ENCODE measurements at regions of chr10 and their contacts with region 1.

Region 1: DNA sequence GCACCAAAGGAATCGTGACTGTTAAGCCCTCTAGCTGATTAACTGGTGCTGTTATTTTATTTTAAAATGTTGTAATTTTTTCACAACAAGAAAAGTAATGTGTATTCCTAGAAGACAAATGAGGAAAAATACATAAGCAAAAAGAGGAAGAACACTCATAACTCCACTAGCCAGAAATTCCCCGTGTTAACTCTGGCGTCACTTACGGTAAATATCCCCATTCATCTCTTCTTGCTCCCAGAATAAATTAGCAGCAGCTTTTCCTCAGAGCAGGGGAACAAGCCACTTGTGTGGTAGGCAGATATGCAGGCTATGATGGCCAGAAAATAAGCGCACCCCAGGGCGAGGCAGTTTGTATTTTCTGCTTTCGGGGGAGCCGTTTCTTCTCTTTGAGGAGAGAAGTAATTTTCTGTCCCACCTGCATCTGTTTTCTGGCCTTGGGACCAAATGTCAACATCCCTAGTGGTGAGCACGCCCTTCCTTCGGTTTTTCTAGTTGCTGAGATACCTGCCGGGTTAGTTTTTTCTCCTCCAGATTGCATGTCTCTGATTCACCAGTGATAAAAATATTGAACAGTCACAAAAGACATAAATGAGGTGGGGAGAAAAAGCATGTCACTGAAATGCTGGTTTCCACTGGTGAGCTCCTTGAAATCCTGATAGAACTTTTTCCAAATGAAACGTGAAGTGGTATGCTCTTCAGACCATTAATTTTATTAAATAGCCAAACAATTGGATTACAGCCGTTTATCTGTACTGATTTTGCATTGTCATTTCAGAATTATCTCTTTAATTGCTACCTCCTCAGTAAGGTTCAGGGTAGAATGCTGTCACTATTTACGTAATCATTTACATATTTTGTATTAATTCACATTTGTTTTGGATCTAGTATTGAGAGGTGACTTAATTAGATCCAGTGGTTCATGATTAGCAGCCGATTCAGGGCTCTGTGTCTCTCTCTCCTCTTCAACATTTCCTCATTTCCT is 268.1 kb downstream of the CAMK1D start:
- H3K4me3 Mint-ChIP-seq: no peak overlapping the region
- H3K27ac Mint-ChIP-seq: peak overlapping the region; percentile 81
- H3K4me1 Mint-ChIP-seq: peaks cover 30% of the 10 kb centered on the region
- H3K27me3 Mint-ChIP-seq: peaks cover 3% of the 10 kb centered on the region

Region 2: DNA sequence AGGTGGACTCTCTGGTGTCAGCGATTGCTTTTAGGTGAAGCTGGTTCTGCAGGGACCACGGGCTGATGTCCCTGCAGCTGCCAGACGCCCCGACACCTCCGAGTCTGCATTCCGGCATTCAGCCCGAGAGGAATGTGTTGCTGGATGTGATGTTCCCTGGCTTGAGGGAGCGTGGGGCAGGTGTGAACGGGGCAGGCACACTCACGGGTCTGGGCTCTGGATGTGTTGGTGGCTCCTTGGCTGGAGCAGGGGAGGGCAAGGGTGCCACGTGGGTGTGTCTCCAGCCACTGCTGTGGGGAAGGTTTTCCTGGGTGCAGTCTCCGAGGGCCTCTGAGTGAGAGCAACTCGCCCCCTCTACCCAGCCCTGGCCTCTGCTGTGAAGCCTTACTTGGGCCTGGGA is 127.7 kb before region 1 on chr10:
- intact Hi-C with region 1: no loop called
- H3K4me3 Mint-ChIP-seq: no peak overlapping the region
- H3K27ac Mint-ChIP-seq: peak overlapping the region; percentile 40
- H3K4me1 Mint-ChIP-seq: peaks cover 41% of the 10 kb centered on the region
- H3K27me3 Mint-ChIP-seq: no peaks in the 10 kb centered on the region

Region 3: DNA sequence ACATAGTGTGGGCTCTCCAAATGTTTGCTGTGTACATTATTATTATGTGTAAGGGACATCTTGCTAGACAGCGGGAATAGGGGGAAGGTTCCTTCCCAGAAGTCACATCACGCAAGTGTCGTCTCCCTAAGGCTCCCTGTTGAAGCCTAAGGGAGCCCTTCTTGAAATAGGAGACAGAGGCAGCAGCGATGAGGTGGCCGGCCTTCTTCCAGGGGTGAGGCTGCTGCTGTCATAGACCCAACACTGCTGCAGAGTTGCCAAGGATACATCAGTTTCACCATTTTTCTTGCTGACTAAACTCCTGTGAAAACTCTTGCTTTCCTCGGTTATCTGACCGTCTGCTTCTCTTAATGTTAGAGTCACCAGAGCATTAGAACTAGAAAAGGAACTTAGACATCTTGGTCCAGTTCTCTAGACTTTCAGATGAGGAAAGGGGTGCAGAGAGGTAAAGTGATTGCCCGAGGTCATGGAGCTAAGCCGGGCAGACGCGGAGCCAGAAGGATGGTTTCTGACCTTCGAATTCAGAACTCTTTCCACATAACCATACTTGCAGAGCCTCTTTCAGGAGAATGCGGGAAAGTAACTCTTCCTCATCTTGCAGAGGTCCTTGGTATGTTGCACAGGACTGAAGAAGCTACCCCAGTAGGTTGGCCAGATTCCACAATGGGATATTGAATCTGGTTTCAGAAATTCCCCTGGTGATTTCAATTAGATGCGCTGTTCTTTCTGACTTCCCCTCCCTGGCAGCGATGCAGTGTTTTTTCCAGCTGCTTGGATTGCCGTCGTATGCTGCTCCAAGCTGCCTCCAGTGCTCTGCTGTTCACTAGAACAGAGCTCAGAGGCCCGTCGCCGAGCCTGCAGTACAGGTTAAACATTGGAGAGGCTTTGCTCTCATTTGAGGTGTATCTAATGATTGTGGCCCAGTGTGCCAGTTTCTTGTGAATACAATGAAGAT is 51.0 kb before region 1 on chr10:
- intact Hi-C with region 1: no loop called
- H3K4me3 Mint-ChIP-seq: no peak overlapping the region
- H3K27ac Mint-ChIP-seq: no peak overlapping the region
- H3K4me1 Mint-ChIP-seq: peaks cover 35% of the 10 kb centered on the region
- H3K27me3 Mint-ChIP-seq: no peaks in the 10 kb centered on the region

Region 4: DNA sequence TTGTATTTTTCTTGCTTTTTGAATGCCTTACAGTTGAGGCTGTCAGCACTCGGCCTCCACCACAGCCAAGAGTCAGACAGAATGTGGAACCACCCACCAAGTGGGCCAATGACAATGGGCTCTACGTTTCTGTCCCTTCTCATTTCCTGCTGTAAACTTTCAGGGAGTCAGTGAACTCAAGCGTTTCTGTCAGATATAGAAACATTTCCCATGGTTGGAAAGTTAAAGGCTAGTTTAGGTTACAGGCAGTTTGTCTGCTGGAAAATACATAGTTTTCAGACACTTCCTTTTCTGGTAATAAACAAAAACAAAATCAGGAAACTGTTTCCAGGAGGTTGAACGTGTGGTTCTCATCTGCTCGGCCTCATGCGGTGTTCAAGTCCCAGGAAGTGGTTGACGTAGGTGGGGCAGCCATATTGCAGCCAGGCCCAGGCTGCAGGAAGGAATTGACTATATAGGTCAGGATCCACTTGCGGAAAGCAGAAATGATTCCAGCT is 23.0 kb before region 1 on chr10:
- intact Hi-C with region 1: loop called (anchors 2 kb)
- H3K4me3 Mint-ChIP-seq: no peak overlapping the region
- H3K27ac Mint-ChIP-seq: peak overlapping the region; percentile 76
- H3K4me1 Mint-ChIP-seq: peaks cover 31% of the 10 kb centered on the region
- H3K27me3 Mint-ChIP-seq: no peaks in the 10 kb centered on the region